ENCODE measurements at regions of chr4 and their contacts with region 1.

Region 1: DNA sequence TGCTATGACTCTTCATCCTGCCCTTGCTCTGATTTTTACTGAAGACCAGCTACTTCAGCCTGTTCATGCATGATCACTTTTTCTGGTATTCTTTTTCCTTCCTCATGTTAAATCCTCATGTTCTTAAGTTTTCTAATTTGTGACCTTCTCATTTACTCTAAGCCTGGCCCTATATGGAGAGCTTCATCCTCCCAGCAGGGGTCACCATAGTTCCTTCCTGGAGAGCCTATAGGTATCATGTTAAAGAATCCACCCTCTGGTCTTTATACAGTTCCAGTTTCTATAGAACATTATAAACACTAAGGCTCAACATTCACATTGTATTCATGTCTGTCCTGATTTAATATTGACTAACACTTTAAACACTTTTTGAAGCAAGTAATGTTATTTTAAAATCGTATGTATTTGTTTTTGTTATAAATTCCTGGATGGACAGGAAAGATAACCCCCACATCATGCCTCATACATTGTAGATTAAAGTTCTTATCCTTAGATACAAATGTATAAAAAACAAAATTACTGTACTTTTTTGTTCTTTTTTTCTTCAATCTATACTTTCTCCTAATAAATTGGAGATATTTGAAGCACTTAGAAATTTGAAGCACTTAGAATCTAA is 53.8 kb upstream of the OTUD4 start:
- DNase-seq: peak in 40 of 42 donors; percentile 7 to 82 (median 56)

Region 2: DNA sequence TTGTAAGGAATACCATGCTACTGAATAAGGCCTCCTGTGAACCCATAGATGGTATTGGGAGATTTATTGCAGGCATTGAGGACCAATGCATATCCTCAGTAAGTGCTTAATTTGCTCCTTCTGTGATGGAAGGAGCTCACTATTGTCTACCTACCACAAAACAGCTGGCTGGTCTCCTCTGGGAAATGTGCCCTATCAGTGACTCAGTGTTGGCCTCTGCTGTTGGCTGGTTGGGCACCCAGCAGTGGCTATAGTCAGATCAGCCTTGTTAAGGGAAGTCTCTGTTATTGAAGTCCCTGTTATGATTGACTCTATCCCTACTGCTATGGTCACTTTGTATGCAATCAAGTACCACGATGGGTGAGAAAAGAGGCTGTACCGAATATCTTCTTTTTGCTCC is 26.3 kb before region 1 on chr4:
- intact Hi-C with region 1: no loop called
- DNase-seq: no peak

Region 3: DNA sequence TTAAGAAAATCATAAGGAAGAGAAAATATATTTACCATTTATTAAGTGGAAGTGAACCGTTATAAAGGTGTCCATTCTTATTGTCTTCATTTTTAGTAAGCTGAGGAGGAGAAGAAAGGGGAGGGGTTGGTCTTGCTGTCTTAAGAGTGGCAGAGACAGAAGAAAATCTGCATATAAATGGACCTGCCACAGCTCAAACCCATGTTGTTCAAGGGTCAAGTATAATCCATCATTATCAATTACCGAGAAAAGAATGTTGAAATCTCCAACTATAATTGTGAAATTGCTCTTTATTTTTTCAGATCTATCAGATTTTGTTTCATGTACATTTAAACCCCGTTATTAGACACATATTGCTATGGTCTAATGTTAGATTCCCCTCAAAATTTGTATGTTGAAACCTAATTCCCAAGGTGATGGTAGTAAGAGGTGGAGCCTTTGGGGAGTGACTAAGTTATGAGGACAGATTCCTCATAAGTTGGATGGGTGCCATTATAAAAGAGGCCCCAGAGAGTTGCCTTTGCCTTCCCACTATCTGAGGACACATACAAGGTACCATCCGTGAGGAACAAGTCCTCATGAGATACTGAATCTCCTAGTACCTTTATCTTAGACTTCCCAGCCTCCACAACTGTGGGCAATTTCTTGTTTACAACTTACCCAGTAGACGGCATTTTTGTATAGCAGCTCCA is 189.0 kb after region 1 on chr4:
- intact Hi-C with region 1: no loop called
- DNase-seq: no peak

Region 4: DNA sequence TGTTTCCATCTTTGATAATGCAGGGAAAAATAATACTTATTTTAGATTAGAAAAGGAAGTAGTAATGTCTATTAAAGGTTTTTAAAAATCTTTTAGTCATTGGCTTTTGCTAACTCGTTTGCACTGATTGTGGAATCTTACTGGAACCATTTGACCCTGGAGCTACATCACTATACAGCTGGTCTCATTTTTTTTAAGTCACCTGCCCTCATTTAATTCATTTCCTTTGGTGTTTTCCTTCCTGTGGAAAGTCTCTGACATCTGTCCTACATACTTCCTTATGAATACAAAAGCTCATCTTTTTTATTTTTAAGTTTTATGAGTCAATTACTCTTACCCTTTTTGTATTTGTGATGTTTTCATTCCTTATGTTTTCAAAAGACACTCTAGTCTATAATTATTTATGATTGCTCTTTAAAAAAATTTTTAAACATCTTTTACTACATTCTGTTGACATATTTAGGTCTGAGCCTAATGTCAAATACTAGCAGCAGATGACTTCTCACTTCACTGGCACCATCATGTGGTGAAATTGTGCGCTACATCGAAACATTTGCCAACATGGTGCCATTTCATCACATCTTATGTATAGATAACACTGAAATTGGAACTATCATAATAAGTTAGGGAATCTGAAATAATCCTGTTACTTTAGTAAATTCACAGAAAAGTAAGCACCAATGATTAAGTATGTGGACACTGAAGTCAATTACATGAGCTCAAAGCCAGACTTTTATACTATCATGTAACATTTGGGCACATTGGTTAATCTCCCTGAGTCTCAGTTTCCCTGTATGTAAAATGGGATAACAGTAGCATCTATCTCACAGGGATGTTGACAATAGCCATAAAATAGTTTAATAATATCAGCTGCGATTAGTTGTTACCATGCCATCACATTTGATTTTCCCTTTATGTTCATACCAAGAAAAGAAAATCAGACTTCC is 375.6 kb after region 1 on chr4:
- intact Hi-C with region 1: loop called (anchors 5 kb)
- DNase-seq: peak; percentile 14 to 87 (median 72)

Measured in head of caudate nucleus (tissue), 42 donors.